ENCODE measurements at regions of chr10 and their contacts with region 1.

Region 1: GRCh38 chr10:85256481-85256880 is 928.1 kb downstream of the CCSER2 start:
- DNase-seq: no peak
- H3K4me3 ChIP-seq: no peak overlapping the region
- H3K27ac ChIP-seq: no peak overlapping the region
- H3K4me1 ChIP-seq: no peaks in the 10 kb centered on the region
- H3K27me3 ChIP-seq: no peaks in the 10 kb centered on the region
- CTCF ChIP-seq: no peak
- EP300 ChIP-seq: no peak
- POLR2A ChIP-seq: no peak
- RAD21 ChIP-seq: no peak

Region 2: DNA sequence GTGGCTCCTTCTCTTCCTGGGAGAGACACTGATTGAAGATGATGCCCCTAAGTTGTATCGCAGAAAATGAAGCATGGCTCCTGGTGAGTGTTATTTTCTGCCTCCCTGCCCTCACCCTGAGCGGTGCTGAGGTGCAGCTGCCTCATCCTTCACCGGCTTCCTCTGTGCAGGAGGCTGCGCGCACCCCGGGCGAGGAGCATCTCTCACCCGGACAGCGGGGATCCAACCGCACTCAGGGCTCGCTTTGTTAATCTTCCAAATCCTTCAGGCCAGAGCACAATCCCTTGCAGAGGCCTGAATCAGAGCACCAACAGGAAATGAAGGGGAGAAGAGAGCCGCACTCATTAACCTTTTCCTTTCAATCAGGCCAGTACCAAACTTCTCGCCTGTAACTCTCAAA is 17.8 kb before region 1 on chr10:
- CTCF ChIA-PET with region 1: interaction called, 10 read pairs
- POLR2A ChIA-PET with region 1: no interaction called
- DNase-seq: no peak
- H3K4me3 ChIP-seq: no peak overlapping the region
- H3K27ac ChIP-seq: no peak overlapping the region
- H3K4me1 ChIP-seq: no peaks in the 10 kb centered on the region
- H3K27me3 ChIP-seq: no peaks in the 10 kb centered on the region
- CTCF ChIP-seq: no peak
- EP300 ChIP-seq: no peak
- POLR2A ChIP-seq: no peak
- RAD21 ChIP-seq: no peak

Region 3: DNA sequence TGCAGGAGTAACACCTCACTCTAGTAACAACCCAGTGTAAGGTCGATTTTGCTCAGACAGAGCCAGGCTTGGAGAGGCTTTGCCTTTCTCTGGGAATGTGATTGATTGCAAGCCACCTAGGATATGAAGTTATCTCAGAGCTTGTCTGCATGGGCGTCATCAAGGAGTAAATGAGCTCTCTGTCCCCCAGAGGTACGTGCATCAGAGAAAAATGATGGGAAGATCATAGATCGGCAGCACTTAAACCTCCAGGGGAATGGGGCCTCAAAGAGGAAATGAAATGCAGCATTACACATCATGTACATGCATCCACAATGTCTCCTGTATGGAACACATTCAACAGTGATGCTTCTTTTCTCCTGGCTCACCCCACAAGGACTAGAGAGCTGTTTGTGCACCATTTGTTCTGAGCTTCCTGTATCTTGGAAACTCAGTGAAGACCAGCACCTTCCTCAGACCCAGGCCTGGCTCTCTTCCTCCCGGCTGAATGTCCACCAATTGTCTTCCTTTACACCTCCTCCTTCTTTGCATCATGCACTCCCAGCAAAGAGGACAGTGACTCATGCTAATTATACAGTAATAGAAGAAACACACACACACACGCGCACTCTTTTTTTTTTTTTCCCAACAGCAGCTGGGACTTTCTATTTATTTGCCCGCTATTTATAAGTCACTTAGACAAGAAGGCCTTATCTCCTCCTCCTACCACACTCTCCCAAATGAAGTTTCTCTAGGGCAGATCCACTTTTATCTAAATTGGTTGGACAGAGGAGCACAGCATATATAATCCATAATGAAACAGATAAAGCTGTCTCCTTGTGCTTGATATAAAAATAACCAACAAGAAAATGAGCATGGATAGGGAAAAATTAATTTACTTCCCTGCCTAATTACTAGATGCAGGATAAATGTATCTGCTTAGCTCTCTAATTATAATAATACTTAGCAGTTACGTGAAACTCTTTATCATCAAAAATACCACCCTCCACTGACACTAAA is 62.6 kb after region 1 on chr10:
- CTCF ChIA-PET with region 1: no interaction called
- POLR2A ChIA-PET with region 1: no interaction called
- DNase-seq: no peak
- H3K4me3 ChIP-seq: no peak overlapping the region
- H3K27ac ChIP-seq: no peak overlapping the region
- H3K4me1 ChIP-seq: no peaks in the 10 kb centered on the region
- H3K27me3 ChIP-seq: no peaks in the 10 kb centered on the region
- CTCF ChIP-seq: no peak
- EP300 ChIP-seq: no peak
- POLR2A ChIP-seq: no peak
- RAD21 ChIP-seq: no peak